ENCODE measurements at regions of chr18 and their contacts with region 1.

Region 1: DNA sequence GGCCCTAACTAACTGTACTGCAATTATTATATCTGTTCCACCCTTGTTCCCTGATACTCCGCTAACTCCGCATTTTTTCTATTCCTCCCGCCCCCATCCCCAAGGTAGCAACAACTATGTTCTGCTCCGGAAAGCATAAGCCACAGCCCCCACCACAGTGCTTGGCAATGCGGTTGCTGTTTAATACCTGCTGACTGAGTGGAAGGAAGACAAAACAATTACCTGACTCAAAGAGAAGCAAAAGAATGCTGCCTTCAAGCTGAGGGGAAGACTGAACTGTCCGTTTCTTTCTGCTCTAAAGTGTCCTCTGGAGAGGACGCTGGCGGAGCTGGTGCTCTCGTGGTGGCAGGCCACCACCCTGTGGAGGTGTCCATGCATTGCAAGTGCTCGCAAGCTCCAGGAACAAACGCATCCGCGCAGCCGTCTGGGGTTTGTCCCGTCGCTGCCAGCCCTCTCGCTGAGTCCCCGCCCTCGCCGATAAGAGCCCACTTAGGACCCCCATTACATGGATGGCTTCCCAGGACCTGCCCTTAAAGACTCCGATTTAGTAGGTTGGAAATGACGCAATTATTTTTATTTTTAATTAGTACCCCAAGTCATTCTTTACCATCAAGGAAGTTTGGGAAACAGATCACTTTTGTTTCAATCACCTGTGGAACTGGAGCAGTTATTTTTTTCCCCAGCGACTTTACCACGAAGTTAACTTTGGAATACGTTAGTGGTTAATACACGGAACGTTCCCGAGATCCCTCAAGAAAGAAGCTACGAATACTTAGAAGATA is 1.6 kb upstream of the MYL12A start:
- DNase-seq: peak; percentile 81 to 85
- H3K4me3 ChIP-seq: peak overlapping the region; percentile 45 to 91 (median 54); a peak in 7 of 8 replicates
- H3K27ac ChIP-seq: no peak overlapping the region
- H3K4me1 ChIP-seq: peaks cover 0 to 9% (median 1%) of the 10 kb centered on the region in 4 experiments; a peak in 2 of 7 replicates
- H3K27me3 ChIP-seq: no peaks in the 10 kb centered on the region
- CTCF ChIP-seq: peak; percentile 88 to 94 (median 94)
- EP300 ChIP-seq: 0 out of 3 replicates have a peak, but pooled peaks of 1 of the 2 experiments have one; percentile 19
- POLR2A ChIP-seq: peak in 1 of 2 experiments; percentile 49; a peak in 1 of 3 replicates
- RAD21 ChIP-seq: peak; percentile 99 to 100

Region 2: DNA sequence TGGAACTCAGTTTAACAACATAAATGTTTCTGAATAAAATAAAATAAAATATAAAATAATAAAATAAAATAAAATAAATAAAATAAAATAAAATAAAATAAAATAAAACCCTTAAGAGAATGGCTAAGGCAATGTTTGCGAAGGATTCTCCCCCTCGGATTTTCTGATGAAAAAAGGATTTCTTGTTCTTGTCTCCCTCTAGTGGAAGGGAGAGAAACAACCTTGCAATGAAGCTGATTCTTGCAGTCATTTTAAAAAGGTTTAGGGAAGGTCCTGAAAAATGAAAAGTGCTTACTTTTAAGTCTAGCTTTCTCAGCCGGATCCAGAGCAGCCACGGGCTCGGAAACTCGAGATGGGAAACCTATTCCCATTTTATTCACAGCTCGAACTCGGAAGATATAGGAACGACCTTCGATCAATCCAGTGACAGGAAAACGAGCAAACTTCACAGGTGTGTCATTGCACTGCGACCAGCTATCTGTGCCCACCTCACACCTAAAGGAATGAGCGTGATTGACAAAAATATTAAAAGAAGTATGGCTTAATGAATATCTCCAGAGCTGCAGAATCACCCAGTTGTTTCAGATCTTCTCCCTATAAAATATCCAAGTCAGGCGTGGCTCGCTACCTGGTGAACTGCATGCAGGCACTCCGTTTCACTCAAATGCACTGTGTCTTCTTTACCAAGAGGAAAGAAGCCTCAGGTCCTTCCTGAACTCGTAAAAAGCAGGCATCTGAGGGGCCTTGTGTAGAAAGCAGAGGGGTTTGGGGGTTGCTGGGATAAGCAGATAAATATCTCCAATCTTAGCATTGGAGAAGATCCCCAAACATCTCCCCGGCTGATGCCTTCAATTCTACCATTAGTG is 94.4 kb before region 1 on chr18:
- CTCF ChIA-PET with region 1: interaction called, 22 read pairs
- POLR2A ChIA-PET with region 1: interaction called, 3 read pairs
- DNase-seq: no peak
- H3K4me3 ChIP-seq: no peak overlapping the region
- H3K27ac ChIP-seq: no peak overlapping the region
- H3K4me1 ChIP-seq: no peaks in the 10 kb centered on the region
- H3K27me3 ChIP-seq: no peaks in the 10 kb centered on the region; a peak in 1 of 7 replicates
- CTCF ChIP-seq: peak in 2 of 3 experiments; percentile 52 to 70; a peak in 2 of 4 replicates
- EP300 ChIP-seq: no peak
- POLR2A ChIP-seq: no peak
- RAD21 ChIP-seq: peak; percentile 69 to 71

Region 3: GRCh38 chr18:3234457-3234856 is 11.6 kb before region 1 on chr18:
- CTCF ChIA-PET with region 1: interaction called, 13 read pairs
- POLR2A ChIA-PET with region 1: interaction called, 9 read pairs
- DNase-seq: no peak
- H3K4me3 ChIP-seq: no peak overlapping the region
- H3K27ac ChIP-seq: no peak overlapping the region
- H3K4me1 ChIP-seq: peaks cover 0 to 8% (median 2%) of the 10 kb centered on the region in 4 experiments; a peak in 3 of 7 replicates
- H3K27me3 ChIP-seq: no peaks in the 10 kb centered on the region
- CTCF ChIP-seq: no peak
- EP300 ChIP-seq: no peak
- POLR2A ChIP-seq: no peak
- RAD21 ChIP-seq: no peak

Region 4: DNA sequence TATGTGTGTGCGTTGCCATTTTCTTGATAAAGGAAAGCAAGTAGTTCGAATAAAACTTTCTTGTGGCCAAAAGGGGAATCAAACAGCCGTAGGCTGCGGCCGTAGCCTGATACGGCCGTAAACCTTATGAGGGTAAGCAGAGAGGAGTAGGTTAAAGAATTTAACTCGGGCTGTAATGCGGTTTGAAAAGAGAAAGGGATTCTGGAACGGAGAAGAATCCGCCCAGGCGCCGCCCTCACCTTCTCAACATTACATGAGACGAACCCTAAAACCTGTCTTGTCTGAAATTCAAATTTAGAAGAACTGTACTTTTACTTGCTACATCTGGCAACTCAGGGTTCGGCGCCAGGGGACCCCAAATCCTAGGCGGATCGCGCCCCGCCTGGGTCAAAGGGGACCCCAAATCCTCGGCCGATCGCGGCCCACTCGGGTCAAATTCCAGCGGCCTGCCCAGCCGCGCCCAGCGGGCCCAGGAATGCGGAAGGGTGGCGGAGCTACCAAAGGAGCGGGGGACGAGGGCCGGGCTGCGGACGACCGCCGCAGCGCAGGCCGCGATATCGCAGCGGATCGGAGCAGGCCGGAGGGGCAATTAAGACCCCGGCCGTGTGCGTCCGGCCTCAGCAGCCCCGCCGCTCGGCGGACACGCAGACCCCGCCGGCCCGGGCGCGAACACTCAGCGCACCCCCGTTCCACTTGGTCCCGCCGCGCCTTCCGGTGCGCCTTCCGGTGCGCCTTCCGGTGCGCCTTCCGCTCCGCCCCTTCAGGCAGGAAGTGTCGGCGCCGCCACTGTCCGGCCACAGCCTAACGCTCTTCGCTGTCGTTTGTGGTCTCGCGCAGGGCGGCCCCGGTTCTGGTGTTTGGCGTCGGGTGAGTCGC is 15.6 kb after region 1 on chr18 and contains the start of gene MYL12B:
- CTCF ChIA-PET with region 1: interaction called, 3 read pairs
- POLR2A ChIA-PET with region 1: interaction called, 60 read pairs
- DNase-seq: peak; percentile 21 to 89
- H3K4me3 ChIP-seq: peak within 1 kb of the TSS; percentile 84 to 99 (median 88)
- H3K27ac ChIP-seq: peak within 1 kb of the TSS; percentile 100
- H3K4me1 ChIP-seq: peaks cover 0 to 9% (median 4%) of the 10 kb centered on the region in 4 experiments; a peak in 5 of 7 replicates
- H3K27me3 ChIP-seq: no peaks in the 10 kb centered on the region
- CTCF ChIP-seq: no peak
- EP300 ChIP-seq: peak in 1 of 2 experiments; percentile 96; a peak in 2 of 3 replicates
- POLR2A ChIP-seq: peak; percentile 74 to 86
- RAD21 ChIP-seq: no peak
- total RNA-seq, gene MYL12B: 164 and 174 TPM in 2 replicates

Region 5: DNA sequence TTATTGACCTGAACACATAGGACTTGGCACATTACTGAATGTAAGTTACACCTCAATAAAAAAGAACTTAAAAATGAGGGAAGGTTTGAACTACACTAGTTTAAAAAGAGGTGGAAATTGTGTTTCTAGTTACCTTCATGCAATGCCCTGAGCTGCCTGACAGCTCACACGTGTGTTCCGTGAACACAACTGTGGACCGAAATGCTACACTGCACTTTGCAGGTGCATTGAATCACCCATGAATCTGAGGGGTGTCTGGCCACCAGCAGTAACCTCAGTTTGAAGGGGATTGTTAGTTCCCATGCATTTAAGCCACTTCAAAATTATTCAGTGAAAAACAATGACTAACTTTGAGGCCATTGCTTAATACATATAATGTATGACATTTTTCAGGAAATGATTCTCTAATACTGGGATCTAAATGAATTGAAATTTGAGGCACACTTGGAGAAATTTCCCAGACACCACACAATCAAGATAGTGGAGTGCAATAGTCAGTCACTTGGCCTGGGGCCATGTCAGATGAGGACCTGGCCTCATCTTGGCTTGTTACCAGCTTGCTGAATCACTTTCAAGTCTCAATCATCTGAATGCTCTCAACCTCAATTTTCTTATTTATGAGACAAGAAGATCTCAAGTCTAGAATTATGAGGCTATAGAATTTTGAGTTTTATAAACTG is 75.2 kb after region 1 on chr18:
- CTCF ChIA-PET with region 1: no interaction called
- POLR2A ChIA-PET with region 1: no interaction called
- DNase-seq: no peak
- H3K4me3 ChIP-seq: no peak overlapping the region
- H3K27ac ChIP-seq: no peak overlapping the region
- H3K4me1 ChIP-seq: no peaks in the 10 kb centered on the region; a peak in 1 of 7 replicates
- H3K27me3 ChIP-seq: no peaks in the 10 kb centered on the region
- CTCF ChIP-seq: no peak
- EP300 ChIP-seq: no peak
- POLR2A ChIP-seq: no peak
- RAD21 ChIP-seq: no peak